ENCODE measurements at regions of chr22 and their contacts with region 1.

Region 1: GRCh38 chr22:36765943-36766450 is 9.9 kb downstream of the IFT27 start:
- DNase-seq: no peak
- ATAC-seq: no peak
- H3K4me3 ChIP-seq: no peak overlapping the region
- H3K4me3 Mint-ChIP-seq: no peak overlapping the region
- H3K27ac ChIP-seq: no peak overlapping the region
- H3K27ac Mint-ChIP-seq: no peak overlapping the region
- H3K4me1 ChIP-seq: no peaks in the 10 kb centered on the region
- H3K4me1 Mint-ChIP-seq: no peaks in the 10 kb centered on the region
- H3K27me3 ChIP-seq: no peaks in the 10 kb centered on the region
- H3K27me3 Mint-ChIP-seq: no peaks in the 10 kb centered on the region
- CTCF ChIP-seq: no peak

Region 2: DNA sequence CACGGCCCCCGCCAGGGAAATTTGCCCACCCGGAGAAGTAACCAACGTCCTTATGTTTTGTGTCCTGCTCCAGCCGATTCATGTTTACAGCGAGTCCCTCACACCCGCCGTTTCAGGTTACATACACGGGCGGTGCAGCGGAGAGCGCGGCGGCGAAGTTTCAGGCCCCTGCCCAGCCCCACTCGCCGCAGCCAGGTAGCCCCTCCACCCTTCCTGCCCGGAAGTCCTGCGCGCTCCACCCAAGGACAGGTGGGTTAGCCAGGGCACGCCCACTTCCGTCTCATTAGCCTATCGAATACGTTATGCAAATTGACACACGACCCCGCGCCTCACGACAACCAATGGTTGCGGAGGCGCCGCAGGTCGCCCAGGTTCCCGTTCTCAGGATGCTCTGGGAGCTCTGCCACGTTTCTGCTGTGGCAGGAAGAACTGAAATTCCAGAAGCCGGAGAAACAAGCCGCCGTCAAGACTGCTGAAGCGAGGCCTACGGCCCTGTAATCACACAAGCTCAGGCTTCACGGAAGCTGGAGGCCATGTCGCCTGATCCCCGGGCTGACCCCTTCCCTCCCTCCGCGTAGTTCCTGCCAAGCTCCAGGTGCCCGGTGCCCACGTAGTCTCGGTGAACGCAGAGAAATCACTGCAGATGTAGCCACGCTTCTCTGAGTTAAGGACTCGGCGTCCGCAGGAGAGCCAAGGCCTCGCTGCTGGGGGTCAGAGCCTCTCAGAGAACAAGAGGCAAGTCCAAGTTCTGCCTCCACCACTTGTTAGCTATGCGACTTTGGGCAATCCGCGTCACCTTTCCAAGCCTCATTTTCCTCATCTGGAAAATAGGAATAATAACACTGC is 355.9 kb before region 1 on chr22:
- CTCF ChIA-PET with region 1: no interaction called
- POLR2A ChIA-PET with region 1: no interaction called
- intact Hi-C with region 1: no loop called
- DNase-seq: peak; percentile 18 to 85 (median 75)
- ATAC-seq: peak; percentile 70
- H3K4me3 ChIP-seq: peak overlapping the region; percentile 28 to 58
- H3K4me3 Mint-ChIP-seq: peak overlapping the region; percentile 72
- H3K27ac ChIP-seq: peak overlapping the region; percentile 40 to 53
- H3K27ac Mint-ChIP-seq: peak overlapping the region; percentile 93
- H3K4me1 ChIP-seq: peaks cover 57% of the 10 kb centered on the region
- H3K4me1 Mint-ChIP-seq: peaks cover 51% of the 10 kb centered on the region
- H3K27me3 ChIP-seq: no peaks in the 10 kb centered on the region
- H3K27me3 Mint-ChIP-seq: no peaks in the 10 kb centered on the region
- CTCF ChIP-seq: no peak

Region 3: GRCh38 chr22:36595940-36596339 is 170.1 kb before region 1 on chr22:
- CTCF ChIA-PET with region 1: no interaction called
- POLR2A ChIA-PET with region 1: no interaction called
- intact Hi-C with region 1: no loop called
- DNase-seq: no peak
- ATAC-seq: no peak
- H3K4me3 ChIP-seq: no peak overlapping the region
- H3K4me3 Mint-ChIP-seq: no peak overlapping the region
- H3K27ac ChIP-seq: no peak overlapping the region
- H3K27ac Mint-ChIP-seq: no peak overlapping the region
- H3K4me1 ChIP-seq: no peaks in the 10 kb centered on the region
- H3K4me1 Mint-ChIP-seq: no peaks in the 10 kb centered on the region
- H3K27me3 ChIP-seq: peaks cover 0 to 3% of the 10 kb centered on the region in 2 experiments
- H3K27me3 Mint-ChIP-seq: peaks cover 30% of the 10 kb centered on the region
- CTCF ChIP-seq: no peak

Region 4: GRCh38 chr22:36671404-36671803 is 94.6 kb before region 1 on chr22:
- CTCF ChIA-PET with region 1: no interaction called
- POLR2A ChIA-PET with region 1: no interaction called
- intact Hi-C with region 1: no loop called
- DNase-seq: no peak
- ATAC-seq: no peak
- H3K4me3 ChIP-seq: no peak overlapping the region
- H3K4me3 Mint-ChIP-seq: no peak overlapping the region
- H3K27ac ChIP-seq: no peak overlapping the region
- H3K27ac Mint-ChIP-seq: no peak overlapping the region
- H3K4me1 ChIP-seq: no peaks in the 10 kb centered on the region
- H3K4me1 Mint-ChIP-seq: no peaks in the 10 kb centered on the region
- H3K27me3 ChIP-seq: peaks cover 0 to 4% of the 10 kb centered on the region in 2 experiments
- H3K27me3 Mint-ChIP-seq: peaks cover 21% of the 10 kb centered on the region
- CTCF ChIP-seq: no peak

Region 5: DNA sequence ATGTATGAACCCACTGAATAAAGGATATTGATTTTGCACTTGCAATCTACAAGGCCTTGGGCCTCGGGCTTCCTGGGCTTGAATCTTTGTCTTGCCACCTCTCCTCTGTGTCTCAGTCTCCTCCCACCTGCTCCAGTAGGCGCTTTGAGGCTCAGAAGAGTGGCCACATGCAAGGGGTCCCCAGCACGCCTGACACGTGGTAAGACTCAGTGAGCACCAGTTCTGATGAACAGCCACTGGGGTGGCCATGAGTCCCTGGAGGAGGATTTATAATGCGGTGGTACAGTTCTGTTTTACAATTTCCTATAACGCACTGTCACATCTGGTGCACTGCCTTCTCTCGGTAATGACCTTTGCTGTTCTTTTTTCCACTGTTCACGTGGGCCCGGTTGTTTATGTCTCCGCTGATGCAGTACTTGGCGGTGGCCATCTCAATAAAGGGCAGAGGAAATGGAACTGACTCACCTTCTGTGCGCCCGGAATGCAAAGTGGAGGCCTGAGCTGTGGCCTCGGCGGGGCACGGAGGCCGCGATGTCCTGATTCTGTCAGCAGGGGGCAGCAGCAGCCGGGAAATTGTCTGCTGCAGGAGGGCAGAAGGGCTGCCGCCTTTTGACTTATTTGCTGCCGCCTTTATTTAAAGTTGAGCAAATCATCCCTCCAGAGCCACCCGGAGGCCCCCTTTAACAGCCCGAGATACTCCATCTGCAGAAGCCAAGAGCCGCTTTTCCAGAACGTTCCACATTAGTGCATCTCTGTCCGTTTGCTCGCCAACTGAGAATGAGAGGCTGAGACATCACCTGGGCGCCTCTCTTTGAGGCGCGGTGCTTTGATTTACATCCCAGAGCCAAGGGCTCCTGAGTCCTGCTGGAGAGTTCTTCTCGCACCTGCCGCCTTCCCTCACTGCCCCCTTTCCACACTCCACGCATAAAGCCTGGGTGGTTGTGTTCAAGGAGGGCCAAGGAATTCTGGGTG is 15.9 kb after region 1 on chr22:
- CTCF ChIA-PET with region 1: interaction called, 11 read pairs
- POLR2A ChIA-PET with region 1: interaction called, 6 read pairs
- intact Hi-C with region 1: no loop called
- DNase-seq: peak; percentile 71 to 93 (median 85)
- ATAC-seq: peak; percentile 96
- H3K4me3 ChIP-seq: no peak overlapping the region
- H3K4me3 Mint-ChIP-seq: no peak overlapping the region
- H3K27ac ChIP-seq: no peak overlapping the region
- H3K27ac Mint-ChIP-seq: peak overlapping the region; percentile 41
- H3K4me1 ChIP-seq: peaks cover 11% of the 10 kb centered on the region
- H3K4me1 Mint-ChIP-seq: peaks cover 16% of the 10 kb centered on the region
- H3K27me3 ChIP-seq: peaks cover 0 to 2% of the 10 kb centered on the region in 2 experiments
- H3K27me3 Mint-ChIP-seq: peaks cover 2% of the 10 kb centered on the region
- CTCF ChIP-seq: peak; percentile 95

Region 6: GRCh38 chr22:36808761-36809224 is 42.8 kb after region 1 on chr22:
- CTCF ChIA-PET with region 1: no interaction called
- POLR2A ChIA-PET with region 1: no interaction called
- intact Hi-C with region 1: no loop called
- DNase-seq: peak in 1 of 9 experiments; percentile 11
- ATAC-seq: no peak
- H3K4me3 ChIP-seq: no peak overlapping the region
- H3K4me3 Mint-ChIP-seq: peak overlapping the region; percentile 22
- H3K27ac ChIP-seq: no peak overlapping the region
- H3K27ac Mint-ChIP-seq: no peak overlapping the region
- H3K4me1 ChIP-seq: peaks cover 19% of the 10 kb centered on the region
- H3K4me1 Mint-ChIP-seq: peaks cover 24% of the 10 kb centered on the region
- H3K27me3 ChIP-seq: no peaks in the 10 kb centered on the region
- H3K27me3 Mint-ChIP-seq: peaks cover 10% of the 10 kb centered on the region
- CTCF ChIP-seq: no peak